PC-3 (cell line): ENCODE measurements at regions of chr18 and their contacts with region 1.

Region 1: DNA sequence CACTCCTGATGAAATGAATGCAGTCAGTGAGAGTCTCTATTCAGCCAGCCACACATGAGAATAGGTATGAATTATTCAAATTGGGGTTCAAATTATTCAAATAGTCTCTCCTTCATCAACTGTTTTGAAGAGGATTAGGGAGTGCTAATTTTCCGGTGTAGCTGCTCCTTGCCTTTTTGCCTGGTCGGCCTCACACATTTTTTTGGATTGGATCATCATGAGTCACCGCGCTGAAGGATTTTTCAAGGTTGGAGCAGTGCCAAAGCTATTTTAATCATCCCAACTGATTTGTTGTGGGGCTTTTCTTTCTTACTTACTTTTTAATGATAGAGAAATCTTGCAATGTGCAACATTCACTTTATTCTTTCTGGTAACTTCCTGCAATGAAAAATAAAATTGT is 2.4 kb upstream of the DTNA start:
- DNase-seq: peak; percentile 83
- ATAC-seq: peak; percentile 74
- H3K4me3 ChIP-seq: peak overlapping the region; percentile 33; the same call in 1 of the 2 replicates
- H3K27ac ChIP-seq: peak overlapping the region; percentile 49
- H3K4me1 ChIP-seq: peaks cover 28% of the 10 kb centered on the region
- H3K27me3 ChIP-seq: no peaks in the 10 kb centered on the region
- CTCF ChIP-seq: no peak

Region 2: GRCh38 chr18:34595673-34596303 is 111.9 kb before region 1 on chr18:
- CTCF ChIA-PET with region 1: no interaction called
- POLR2A ChIA-PET with region 1: no interaction called
- intact Hi-C with region 1: no loop called
- DNase-seq: peak; percentile 8
- ATAC-seq: peak; percentile 42; the same call in 1 of the 2 replicates
- H3K4me3 ChIP-seq: no peak overlapping the region
- H3K27ac ChIP-seq: no peak overlapping the region
- H3K4me1 ChIP-seq: peaks cover 6% of the 10 kb centered on the region
- H3K27me3 ChIP-seq: no peaks in the 10 kb centered on the region
- CTCF ChIP-seq: peak; percentile 42; the same call in 1 of the 2 replicates

Region 3: GRCh38 chr18:34767601-34768027 is 59.9 kb after region 1 on chr18:
- CTCF ChIA-PET with region 1: no interaction called
- POLR2A ChIA-PET with region 1: no interaction called
- intact Hi-C with region 1: loop called (anchors 5 kb)
- DNase-seq: peak; percentile 72
- ATAC-seq: peak; percentile 98
- H3K4me3 ChIP-seq: no peak overlapping the region
- H3K27ac ChIP-seq: peak overlapping the region; percentile 89
- H3K4me1 ChIP-seq: peaks cover 13% of the 10 kb centered on the region
- H3K27me3 ChIP-seq: no peaks in the 10 kb centered on the region
- CTCF ChIP-seq: no peak